ENCODE measurements at regions of chr4 and their contacts with region 1.

Region 1: DNA sequence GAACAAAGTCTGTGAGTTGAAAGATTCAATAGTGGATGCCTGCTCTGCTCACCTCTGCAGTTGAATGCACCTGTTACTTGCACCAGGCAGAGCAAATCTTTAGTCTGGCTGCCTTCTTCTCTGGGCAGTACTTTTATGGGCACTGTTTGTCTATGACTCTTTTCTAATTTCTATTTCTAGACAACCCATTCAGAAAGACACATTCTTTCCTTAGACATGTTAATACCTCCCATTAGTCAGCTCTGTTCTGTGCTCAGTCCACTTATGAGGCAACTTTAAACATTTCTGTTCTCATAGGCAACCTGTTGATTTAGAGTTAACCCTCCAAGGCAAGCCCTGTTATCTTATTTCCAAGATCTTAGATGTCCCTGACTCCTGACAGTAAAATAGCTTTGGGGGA is 108.9 kb downstream of the SYNPO2 start:
- DNase-seq: no peak
- ATAC-seq: peak; percentile 50 to 78 (median 74)
- H3K4me3 ChIP-seq: no peak overlapping the region
- H3K27ac ChIP-seq: peak overlapping the region; percentile 44 to 93 (median 79)
- H3K4me1 ChIP-seq: peaks cover 0 to 77% (median 32%) of the 10 kb centered on the region in 12 donors
- H3K27me3 ChIP-seq: no peaks in the 10 kb centered on the region
- CTCF ChIP-seq: no peak
- POLR2A ChIP-seq: peak in 1 of 2 donors; percentile 70

Region 2: GRCh38 chr4:119034276-119035008 is 36.8 kb after region 1 on chr4:
- intact Hi-C with region 1: loop called in 3 of 10 experiments (anchors 5 kb)
- DNase-seq: no peak
- ATAC-seq: peak in 1 of 4 donors; percentile 9
- H3K4me3 ChIP-seq: no peak overlapping the region
- H3K27ac ChIP-seq: peak overlapping the region in 9 of 12 donors; percentile 16 to 91 (median 50)
- H3K4me1 ChIP-seq: peaks cover 0 to 59% (median 34%) of the 10 kb centered on the region in 12 donors
- H3K27me3 ChIP-seq: no peaks in the 10 kb centered on the region
- CTCF ChIP-seq: no peak
- POLR2A ChIP-seq: no peak

Region 3: DNA sequence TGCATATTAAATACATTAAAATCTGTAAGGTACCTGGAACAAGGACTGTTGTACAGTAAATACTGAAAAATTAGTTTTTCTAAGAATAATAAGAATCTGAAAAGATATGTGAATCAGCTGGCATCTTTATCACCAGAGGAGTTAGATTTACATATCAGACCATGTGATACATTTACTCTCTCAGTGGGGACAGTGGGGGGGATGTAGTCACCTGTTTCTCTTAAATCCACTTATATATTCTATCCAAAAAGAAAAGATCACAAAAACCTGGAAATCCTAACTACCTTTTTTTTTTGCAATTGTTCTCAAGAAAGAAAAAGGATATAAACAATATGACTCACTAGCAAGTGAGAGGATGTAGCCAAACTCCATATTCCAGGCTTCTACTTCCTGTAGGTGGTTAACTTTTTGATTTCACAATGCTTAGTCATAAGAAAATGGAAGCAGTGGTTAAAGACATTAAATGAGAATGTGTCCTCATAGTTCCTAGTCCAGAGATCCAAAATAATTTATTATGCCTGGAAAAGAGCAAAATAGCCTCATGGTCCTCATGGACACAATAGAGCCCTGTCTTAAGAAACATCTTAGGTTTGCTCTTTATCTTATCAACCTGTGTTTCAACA is 115.5 kb after region 1 on chr4:
- intact Hi-C with region 1: no loop called
- DNase-seq: no peak
- ATAC-seq: peak in 3 of 4 donors; percentile 81 to 87 (median 83)
- H3K4me3 ChIP-seq: no peak overlapping the region
- H3K27ac ChIP-seq: peak overlapping the region in 9 of 12 donors; percentile 6 to 78 (median 46)
- H3K4me1 ChIP-seq: peaks cover 0 to 36% (median 17%) of the 10 kb centered on the region in 12 donors
- H3K27me3 ChIP-seq: no peaks in the 10 kb centered on the region
- CTCF ChIP-seq: no peak
- POLR2A ChIP-seq: no peak

Region 4: GRCh38 chr4:119162174-119162573 is 164.6 kb after region 1 on chr4:
- intact Hi-C with region 1: no loop called
- DNase-seq: no peak
- ATAC-seq: peak in 3 of 4 donors; percentile 12 to 47 (median 43)
- H3K4me3 ChIP-seq: no peak overlapping the region
- H3K27ac ChIP-seq: peak overlapping the region in 3 of 12 donors; percentile 15 to 26 (median 25)
- H3K4me1 ChIP-seq: peaks cover 0 to 49% (median 8%) of the 10 kb centered on the region in 12 donors
- H3K27me3 ChIP-seq: no peaks in the 10 kb centered on the region
- CTCF ChIP-seq: no peak
- POLR2A ChIP-seq: no peak